A549 (cell line): ENCODE measurements at regions of chr9 and their contacts with region 1.

Region 1: GRCh38 chr9:130433168-130433946 is 11.4 kb upstream of the ASS1 start:
- DNase-seq: peak; percentile 68 to 87
- ATAC-seq: peak; percentile 89 to 97
- H3K4me3 ChIP-seq: peak overlapping the region; percentile 49
- H3K27ac ChIP-seq: peak overlapping the region; percentile 56 to 80; a peak in 5 of 6 replicates
- H3K4me1 ChIP-seq: peaks cover 7% of the 10 kb centered on the region; the same call in 2 of the 3 replicates
- CTCF ChIP-seq: peak; percentile 44
- EP300 ChIP-seq: no peak
- POLR2A ChIP-seq: peak; percentile 24; the same call in 1 of the 2 replicates
- RAD21 ChIP-seq: peak in 1 of 2 experiments; percentile 29; a peak in 1 of 5 replicates

Region 2: DNA sequence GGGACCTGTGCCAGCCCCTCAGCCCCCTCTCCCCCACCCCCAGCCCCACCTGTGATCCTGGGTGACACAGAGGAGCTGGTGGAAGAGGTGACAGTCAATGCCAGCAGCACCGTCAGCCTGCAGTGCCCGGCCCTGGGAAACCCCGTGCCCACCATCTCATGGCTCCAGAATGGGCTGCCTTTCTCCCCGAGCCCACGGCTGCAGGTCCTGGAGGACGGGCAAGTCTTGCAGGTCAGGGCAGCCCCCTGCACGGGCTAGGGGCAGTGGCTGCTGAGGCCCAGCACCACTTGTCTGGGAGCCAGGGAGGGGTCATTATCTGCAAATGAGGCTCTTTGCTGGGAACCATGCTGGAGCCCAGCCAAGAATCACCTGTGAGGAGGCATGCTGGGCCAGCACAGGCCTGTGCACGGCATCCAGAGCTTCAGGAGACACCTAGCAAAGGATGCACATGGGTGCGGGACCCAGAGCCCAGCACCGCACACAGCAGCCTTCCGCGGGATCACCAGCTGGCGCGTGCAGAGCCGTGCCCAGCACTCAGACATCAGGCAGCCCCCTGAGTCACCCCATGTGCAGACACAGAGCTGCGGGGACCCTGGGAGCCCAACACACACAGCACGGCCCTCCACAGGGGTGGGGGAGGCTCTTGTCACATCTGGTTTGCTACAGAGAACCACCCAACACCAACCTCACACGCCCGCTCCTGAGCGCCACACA is 50.6 kb before region 1 on chr9:
- CTCF ChIA-PET with region 1: no interaction called
- POLR2A ChIA-PET with region 1: no interaction called
- DNase-seq: no peak
- ATAC-seq: no peak
- H3K4me3 ChIP-seq: no peak overlapping the region
- H3K27ac ChIP-seq: no peak overlapping the region
- H3K4me1 ChIP-seq: no peaks in the 10 kb centered on the region
- CTCF ChIP-seq: no peak
- EP300 ChIP-seq: no peak
- POLR2A ChIP-seq: no peak
- RAD21 ChIP-seq: no peak

Region 3: GRCh38 chr9:130444565-130445221 is 11.3 kb after region 1 on chr9 and contains the start of gene ASS1:
- CTCF ChIA-PET with region 1: interaction called, 26 read pairs
- POLR2A ChIA-PET with region 1: no interaction called
- DNase-seq: peak in 1 of 2 experiments; percentile 68
- ATAC-seq: peak; percentile 70 to 83
- H3K4me3 ChIP-seq: peak within 1 kb of the TSS; percentile 77
- H3K27ac ChIP-seq: peak within 1 kb of the TSS; percentile 58 to 85; a peak in 5 of 6 replicates
- H3K4me1 ChIP-seq: peaks cover 31% of the 10 kb centered on the region
- CTCF ChIP-seq: no peak
- EP300 ChIP-seq: no peak
- POLR2A ChIP-seq: no peak
- RAD21 ChIP-seq: no peak
- polyA plus RNA-seq, gene ASS1: 32.5 and 36.9 TPM in 2 replicates